Activated B cell treated with CpG ODN at 0.5 μM for 24 hours (primary cell): ENCODE measurements at regions of chr3 and their contacts with region 1.

Region 1: GRCh38 chr3:44510000-44510368 is 32.5 kb upstream of the ZNF445 start:
- DNase-seq: no peak
- ATAC-seq: peak; percentile 30
- H3K4me3 Mint-ChIP-seq: peak overlapping the region; percentile 95
- H3K27ac Mint-ChIP-seq: peak overlapping the region; percentile 92
- H3K4me1 Mint-ChIP-seq: peaks cover 40% of the 10 kb centered on the region
- H3K27me3 Mint-ChIP-seq: no peaks in the 10 kb centered on the region
- CTCF ChIP-seq: no peak

Region 2: DNA sequence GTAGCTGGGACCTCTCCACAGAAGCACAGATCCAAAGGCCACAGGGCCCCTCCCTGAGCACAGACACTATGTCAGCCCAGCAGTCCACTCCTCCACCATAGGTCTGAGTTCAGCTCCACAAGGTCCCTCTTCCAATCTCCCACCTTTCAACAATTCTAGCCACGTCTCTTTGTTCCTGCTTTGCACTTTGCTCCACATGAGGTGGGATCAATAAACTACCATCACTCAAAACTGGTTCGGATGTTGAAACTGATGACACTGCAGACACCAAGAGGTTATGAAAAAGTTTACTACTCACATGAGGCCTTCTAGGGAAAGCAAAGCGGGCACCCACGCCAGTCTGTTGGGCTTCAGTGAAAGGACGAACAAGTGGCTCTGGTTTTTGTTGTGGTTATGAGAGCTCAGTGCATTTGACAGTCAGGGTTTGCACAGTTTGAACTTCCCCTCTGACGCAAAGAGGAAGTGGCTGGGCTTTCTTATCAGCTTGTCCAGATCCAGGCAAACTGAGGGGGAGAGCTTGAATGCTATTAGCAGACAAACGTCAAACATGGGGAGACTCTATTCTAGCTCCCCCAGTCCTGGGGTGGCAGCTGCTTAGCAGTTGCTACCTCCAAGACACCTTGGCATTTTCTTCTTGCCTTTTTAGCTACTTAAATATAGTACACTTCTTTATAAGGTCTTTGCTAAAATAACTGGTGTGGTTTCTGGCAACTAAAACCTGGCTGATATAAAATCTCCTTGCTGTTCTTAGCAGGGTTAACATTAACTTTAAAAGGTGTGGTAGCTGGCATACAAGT is 70.3 kb before region 1 on chr3:
- CTCF ChIA-PET with region 1: no interaction called
- POLR2A ChIA-PET with region 1: interaction called, 14 read pairs
- intact Hi-C with region 1: no loop called
- DNase-seq: no peak
- ATAC-seq: peak; percentile 90
- H3K4me3 Mint-ChIP-seq: peak overlapping the region; percentile 66
- H3K27ac Mint-ChIP-seq: peak overlapping the region; percentile 92
- H3K4me1 Mint-ChIP-seq: peaks cover 21% of the 10 kb centered on the region
- H3K27me3 Mint-ChIP-seq: no peaks in the 10 kb centered on the region
- CTCF ChIP-seq: no peak

Region 3: GRCh38 chr3:44495636-44496415 is 14.2 kb before region 1 on chr3:
- CTCF ChIA-PET with region 1: no interaction called
- POLR2A ChIA-PET with region 1: no interaction called
- intact Hi-C with region 1: no loop called
- DNase-seq: no peak
- ATAC-seq: no peak
- H3K4me3 Mint-ChIP-seq: no peak overlapping the region
- H3K27ac Mint-ChIP-seq: no peak overlapping the region
- H3K4me1 Mint-ChIP-seq: no peaks in the 10 kb centered on the region
- H3K27me3 Mint-ChIP-seq: no peaks in the 10 kb centered on the region
- CTCF ChIP-seq: no peak

Region 4: DNA sequence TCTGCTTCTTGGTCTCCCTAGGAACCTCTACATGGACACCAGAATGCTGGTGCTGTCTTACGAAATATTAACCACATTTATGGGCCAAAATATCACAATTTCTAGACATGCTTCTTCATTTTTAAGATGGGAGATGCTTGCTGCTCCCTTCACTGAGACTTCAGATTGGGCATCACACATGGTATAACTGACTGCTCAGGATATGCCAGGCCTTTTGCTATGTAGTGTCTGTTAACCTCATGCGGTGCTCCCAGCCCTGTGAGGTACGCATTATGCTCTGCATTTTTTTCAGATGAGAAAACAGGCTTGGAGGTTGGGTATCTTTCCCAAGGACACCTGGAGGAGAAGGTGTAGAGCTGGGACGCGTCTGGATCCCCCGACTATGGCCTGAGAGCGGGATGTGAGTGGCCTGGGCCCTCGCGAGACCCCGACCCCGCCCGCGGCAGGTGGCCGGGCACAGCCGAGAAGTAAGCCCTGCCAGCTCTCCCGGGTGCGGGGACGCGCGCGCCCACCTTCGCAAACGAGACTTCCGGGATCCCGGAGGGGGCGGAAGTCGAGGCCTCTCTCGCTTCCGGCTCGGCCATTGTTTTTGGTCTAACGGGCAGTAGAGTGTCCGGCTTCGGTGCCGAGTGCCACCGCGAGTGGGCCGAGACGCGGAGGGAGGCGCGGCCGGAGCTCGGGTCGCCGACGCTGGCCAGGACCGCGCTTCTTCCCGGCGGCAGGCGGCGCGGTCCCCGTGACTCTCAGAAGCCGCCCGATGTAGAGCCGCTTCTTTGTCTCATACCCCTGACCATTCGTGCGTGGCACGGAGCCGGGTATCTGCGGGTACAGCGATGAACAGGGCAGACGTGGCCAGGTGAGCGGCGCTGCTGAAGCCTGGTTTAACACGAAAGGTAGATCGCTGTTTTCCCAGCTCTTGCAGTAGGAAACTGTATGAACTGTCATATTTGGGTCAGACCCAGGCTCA is 44.9 kb after region 1 on chr3 and contains the start of gene ZKSCAN7:
- CTCF ChIA-PET with region 1: interaction called, 3 read pairs
- POLR2A ChIA-PET with region 1: interaction called, 11 read pairs
- intact Hi-C with region 1: loop called (anchors 1 kb)
- DNase-seq: peak; percentile 56
- ATAC-seq: peak; percentile 86
- H3K4me3 Mint-ChIP-seq: peak within 1 kb of the TSS; percentile 94
- H3K27ac Mint-ChIP-seq: peak within 1 kb of the TSS; percentile 87
- H3K4me1 Mint-ChIP-seq: peaks cover 20% of the 10 kb centered on the region
- H3K27me3 Mint-ChIP-seq: peaks cover 7% of the 10 kb centered on the region
- CTCF ChIP-seq: no peak
- total RNA-seq, gene ZKSCAN7: 6.8 and 9.2 TPM in 2 replicates

Region 5: GRCh38 chr3:44976002-44976815 is 466.2 kb after region 1 on chr3 and contains the starts of genes EXOSC7 and ZDHHC3:
- CTCF ChIA-PET with region 1: no interaction called
- POLR2A ChIA-PET with region 1: interaction called, 10 read pairs
- intact Hi-C with region 1: no loop called
- DNase-seq: peak; percentile 76
- ATAC-seq: peak; percentile 94
- H3K4me3 Mint-ChIP-seq: peak within 1 kb of the TSS; percentile 93
- H3K27ac Mint-ChIP-seq: peak within 1 kb of the TSS; percentile 88
- H3K4me1 Mint-ChIP-seq: peaks cover 49% of the 10 kb centered on the region
- H3K27me3 Mint-ChIP-seq: no peaks in the 10 kb centered on the region
- CTCF ChIP-seq: no peak
- total RNA-seq, gene EXOSC7: 42.5 and 44.0 TPM in 2 replicates
- total RNA-seq, gene ZDHHC3: 38.5 and 43.4 TPM in 2 replicates